ENCODE measurements at regions of chr15 and their contacts with region 1.

Region 1: DNA sequence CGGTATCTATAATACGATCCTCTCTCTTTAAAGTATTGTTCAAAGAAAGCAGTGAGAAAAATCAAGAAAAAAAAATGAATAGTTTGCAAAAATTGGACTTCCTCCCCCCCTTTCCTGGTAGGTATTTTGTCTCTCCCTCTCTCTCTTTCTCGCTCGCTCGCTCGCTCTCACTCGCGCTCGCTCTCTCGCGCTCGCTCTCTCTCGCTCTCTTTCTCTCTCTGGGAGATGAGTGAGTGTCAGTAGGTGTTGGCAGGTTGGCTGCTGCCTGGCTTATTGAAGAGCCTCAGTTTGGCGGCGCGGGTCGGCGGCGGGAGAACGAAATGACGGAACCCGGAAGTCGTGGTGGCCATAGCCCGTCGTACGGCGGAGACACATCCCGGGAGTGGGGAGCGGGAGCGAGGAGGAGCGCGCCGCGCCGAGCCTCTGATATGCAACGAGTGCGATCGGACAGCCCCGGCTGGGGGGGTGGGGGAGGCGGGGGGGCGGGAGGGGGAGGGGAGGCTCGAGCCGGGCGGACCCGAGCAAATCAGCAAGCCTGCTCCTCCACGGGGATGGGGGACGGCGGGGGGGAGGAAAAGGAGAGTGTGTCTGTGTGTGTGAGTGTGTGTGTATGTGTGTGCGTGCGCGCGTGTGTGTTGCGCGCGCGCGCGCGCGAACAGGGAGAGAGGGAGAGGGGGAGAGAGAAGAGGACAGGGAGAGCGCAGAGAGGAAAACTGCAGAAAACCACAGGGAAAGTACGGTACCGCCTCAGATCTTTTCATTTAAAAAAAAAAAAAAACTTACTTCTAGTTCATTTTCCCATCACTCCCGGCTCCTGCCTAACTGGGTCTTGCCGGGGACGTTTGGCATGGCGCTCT is at the start of gene MEIS2:
- DNase-seq: peak; percentile 80
- H3K4me3 Mint-ChIP-seq: peak within 1 kb of the TSS; percentile 82
- H3K27ac Mint-ChIP-seq: peak within 1 kb of the TSS; percentile 77
- H3K4me1 Mint-ChIP-seq: no peaks in the 10 kb centered on the region
- H3K27me3 Mint-ChIP-seq: no peaks in the 10 kb centered on the region
- CTCF ChIP-seq: no peak
- total RNA-seq, gene MEIS2: 23.1 and 24.5 TPM in 2 replicates

Region 2: GRCh38 chr15:36905908-36906307 is 194.4 kb before region 1 on chr15:
- CTCF ChIA-PET with region 1: interaction called, 3 read pairs
- intact Hi-C with region 1: loop called (anchors 10 kb)
- DNase-seq: peak; percentile 24
- H3K4me3 Mint-ChIP-seq: no peak overlapping the region
- H3K27ac Mint-ChIP-seq: no peak overlapping the region
- H3K4me1 Mint-ChIP-seq: peaks cover 6% of the 10 kb centered on the region
- H3K27me3 Mint-ChIP-seq: no peaks in the 10 kb centered on the region
- CTCF ChIP-seq: no peak

Region 3: GRCh38 chr15:37059086-37059485 is 41.3 kb before region 1 on chr15:
- CTCF ChIA-PET with region 1: no interaction called
- intact Hi-C with region 1: loop called (anchors 5 kb)
- DNase-seq: no peak
- H3K4me3 Mint-ChIP-seq: no peak overlapping the region
- H3K27ac Mint-ChIP-seq: no peak overlapping the region
- H3K4me1 Mint-ChIP-seq: no peaks in the 10 kb centered on the region
- H3K27me3 Mint-ChIP-seq: no peaks in the 10 kb centered on the region
- CTCF ChIP-seq: no peak

Region 4: GRCh38 chr15:37166402-37166801 is 66.1 kb after region 1 on chr15:
- CTCF ChIA-PET with region 1: no interaction called
- intact Hi-C with region 1: no loop called
- DNase-seq: no peak
- H3K4me3 Mint-ChIP-seq: no peak overlapping the region
- H3K27ac Mint-ChIP-seq: no peak overlapping the region
- H3K4me1 Mint-ChIP-seq: no peaks in the 10 kb centered on the region
- H3K27me3 Mint-ChIP-seq: no peaks in the 10 kb centered on the region
- CTCF ChIP-seq: no peak

Measured in Calu3 (cell line).